Heart left ventricle (tissue), 16 donors: ENCODE measurements at regions of chr3 and their contacts with region 1.

Region 1: GRCh38 chr3:43769471-43770425 is 79.0 kb downstream of the ABHD5 start:
- DNase-seq: peak; percentile 94 to 98 (median 97)
- ATAC-seq: peak; percentile 86 to 94 (median 92)
- H3K4me3 ChIP-seq: peak overlapping the region in 10 of 12 donors; percentile 10 to 55 (median 46)
- H3K27ac ChIP-seq: peak overlapping the region; percentile 31 to 90 (median 86)
- H3K4me1 ChIP-seq: peaks cover 0 to 55% (median 30%) of the 10 kb centered on the region in 12 donors
- H3K27me3 ChIP-seq: no peaks in the 10 kb centered on the region
- CTCF ChIP-seq: peak; percentile 90 to 99 (median 95)
- POLR2A ChIP-seq: peak in 1 of 2 donors; percentile 20

Region 2: DNA sequence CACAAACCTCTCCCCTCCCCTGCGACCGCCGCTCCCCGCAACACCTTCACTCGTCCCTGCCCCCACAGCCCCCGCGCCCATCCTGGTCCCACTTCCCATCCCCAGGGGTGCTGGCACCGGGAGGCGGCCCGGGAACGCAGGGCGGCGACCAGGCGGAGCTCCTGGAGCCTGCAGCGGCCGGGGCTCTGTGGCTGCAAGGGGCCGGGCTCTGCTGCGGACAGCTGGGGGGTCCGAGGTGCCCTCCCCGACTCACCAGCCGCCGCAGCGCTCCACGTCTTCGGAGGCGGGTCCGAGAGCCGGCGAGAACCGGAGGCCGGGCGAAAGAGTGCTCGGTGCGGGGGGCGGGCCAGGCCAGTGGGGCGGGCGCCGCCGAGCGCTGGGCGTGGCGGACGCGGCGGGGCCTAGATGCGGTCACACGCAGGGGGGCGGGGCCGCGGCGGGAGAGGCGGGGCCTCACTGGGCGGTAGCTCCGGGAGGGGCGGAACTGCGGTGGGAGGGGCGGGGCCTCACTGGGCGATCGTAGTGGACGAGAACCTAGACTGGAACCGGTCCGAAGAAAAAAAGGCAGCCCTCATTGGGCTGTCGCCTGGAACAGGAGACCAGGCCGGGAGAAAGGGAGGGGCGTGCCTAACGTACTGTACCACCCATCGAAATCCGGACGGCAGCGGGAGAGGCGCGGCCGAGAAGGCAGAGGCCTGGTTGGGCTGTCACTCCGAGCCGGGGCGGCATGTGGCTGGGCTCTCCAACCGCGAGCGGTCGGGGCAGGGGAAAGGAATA is 147.9 kb before region 1 on chr3 and contains the start of gene ANO10:
- intact Hi-C with region 1: loop called in 2 of 10 experiments (anchors 5 kb)
- DNase-seq: peak; percentile 99
- ATAC-seq: peak; percentile 98 to 99 (median 99)
- H3K4me3 ChIP-seq: peak within 1 kb of the TSS; percentile 77 to 99 (median 90)
- H3K27ac ChIP-seq: peak within 1 kb of the TSS; percentile 20 to 91 (median 82)
- H3K4me1 ChIP-seq: peaks cover 0 to 20% (median 9%) of the 10 kb centered on the region in 12 donors
- H3K27me3 ChIP-seq: no peaks in the 10 kb centered on the region
- CTCF ChIP-seq: no peak
- POLR2A ChIP-seq: peak in 1 of 2 donors; percentile 86
- total RNA-seq, gene ANO10: 8.3 to 29.8 (median 15.8) TPM

Region 3: DNA sequence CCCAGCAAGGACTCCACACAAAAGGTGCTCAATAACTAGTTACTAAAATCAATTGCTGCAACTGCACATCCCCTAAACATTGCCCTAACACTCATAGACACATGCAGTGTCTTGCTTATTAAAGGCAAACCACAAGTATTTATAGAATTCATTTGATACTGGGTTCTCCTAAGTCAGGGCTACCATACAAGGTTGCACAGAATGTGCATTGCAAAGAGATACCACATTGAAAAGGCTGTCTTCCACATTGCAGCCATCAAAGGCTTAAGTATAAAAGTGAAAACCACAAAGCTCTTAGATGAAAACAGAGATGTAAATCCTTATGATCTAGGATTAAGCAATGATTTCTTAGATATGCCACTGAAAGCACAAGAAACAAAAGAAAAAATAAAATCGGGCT is 438.3 kb after region 1 on chr3:
- intact Hi-C with region 1: loop called in 1 of 10 experiments (anchors 10 kb)
- DNase-seq: no peak
- ATAC-seq: no peak
- H3K4me3 ChIP-seq: no peak overlapping the region
- H3K27ac ChIP-seq: no peak overlapping the region
- H3K4me1 ChIP-seq: no peaks in the 10 kb centered on the region
- H3K27me3 ChIP-seq: peaks cover 0 to 10% (median 0%) of the 10 kb centered on the region in 9 donors
- CTCF ChIP-seq: no peak
- POLR2A ChIP-seq: no peak